Mammary epithelial cell (primary cell): ENCODE measurements at regions of chr4 and their contacts with region 1.

Region 1: GRCh38 chr4:134024251-134024650 is 177.3 kb downstream of the PABPC4L start:
- DNase-seq: no peak
- H3K4me3 ChIP-seq: no peak overlapping the region
- H3K27ac ChIP-seq: no peak overlapping the region
- H3K4me1 ChIP-seq: no peaks in the 10 kb centered on the region
- H3K27me3 ChIP-seq: no peaks in the 10 kb centered on the region
- CTCF ChIP-seq: peak in 1 of 2 donors; percentile 64

Region 2: DNA sequence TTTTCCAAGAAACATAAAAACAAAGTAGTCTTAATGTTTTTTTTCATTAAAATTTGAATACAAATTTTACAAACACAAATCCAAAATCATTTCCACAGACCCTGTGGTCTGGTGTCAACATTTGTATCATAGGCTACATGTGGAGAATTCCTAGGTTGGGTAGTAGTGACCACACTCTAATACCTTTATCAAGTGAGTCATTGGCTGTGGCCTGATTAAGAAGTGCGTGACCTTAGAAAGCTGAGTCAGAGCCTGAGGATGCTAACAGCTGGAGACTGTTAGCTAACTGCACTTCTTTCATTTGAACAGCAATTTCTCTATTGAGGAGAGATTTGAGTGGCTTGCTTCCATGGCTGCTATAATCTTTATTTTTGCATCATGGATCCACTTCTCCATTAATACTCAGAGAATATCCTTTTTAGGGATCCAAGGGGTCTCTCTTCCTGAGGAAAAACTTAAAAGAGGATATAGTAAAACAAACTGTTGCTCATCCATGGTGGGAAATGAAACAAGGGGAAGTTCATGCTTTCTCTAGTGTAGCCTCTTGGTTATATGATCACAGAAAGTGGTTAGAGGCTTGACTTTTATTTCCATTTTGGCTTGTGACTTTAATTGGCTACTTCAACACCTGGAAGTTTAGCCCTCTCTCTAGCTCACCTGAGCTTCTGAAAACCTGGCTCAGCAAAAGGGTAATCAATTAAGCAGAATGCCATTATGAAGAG is 158.5 kb before region 1 on chr4:
- CTCF ChIA-PET with region 1: no interaction called
- dilution Hi-C with region 1: no loop called
- in situ Hi-C with region 1: no loop called
- intact Hi-C with region 1: loop called (anchors 10 kb)
- DNase-seq: peak; percentile 74
- H3K4me3 ChIP-seq: no peak overlapping the region
- H3K27ac ChIP-seq: no peak overlapping the region
- H3K4me1 ChIP-seq: peaks cover 6% of the 10 kb centered on the region
- H3K27me3 ChIP-seq: no peaks in the 10 kb centered on the region
- CTCF ChIP-seq: no peak

Region 3: DNA sequence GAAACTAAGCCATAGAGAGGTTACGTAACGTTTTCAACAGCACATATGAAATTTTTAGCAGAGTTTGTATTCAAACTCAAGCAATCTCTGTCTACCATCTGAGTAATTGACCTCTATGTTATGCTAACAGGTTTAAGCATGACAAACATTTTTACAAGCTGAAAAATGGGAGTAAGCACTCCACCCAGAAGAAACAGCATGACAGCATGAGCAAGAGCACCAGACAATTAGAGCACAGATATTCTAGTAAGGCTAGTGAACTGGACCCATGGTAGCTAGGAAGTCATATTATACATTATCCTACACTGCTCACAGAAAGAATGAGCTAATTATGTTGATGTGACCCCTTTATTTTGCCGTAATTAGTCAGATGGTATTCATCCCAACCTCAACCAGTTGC is 23.2 kb before region 1 on chr4:
- CTCF ChIA-PET with region 1: no interaction called
- dilution Hi-C with region 1: no loop called
- in situ Hi-C with region 1: no loop called
- intact Hi-C with region 1: loop called (anchors 1 kb)
- DNase-seq: peak; percentile 65
- H3K4me3 ChIP-seq: no peak overlapping the region
- H3K27ac ChIP-seq: no peak overlapping the region
- H3K4me1 ChIP-seq: no peaks in the 10 kb centered on the region
- H3K27me3 ChIP-seq: no peaks in the 10 kb centered on the region
- CTCF ChIP-seq: no peak

Region 4: GRCh38 chr4:134073711-134074110 is 49.5 kb after region 1 on chr4:
- CTCF ChIA-PET with region 1: no interaction called
- dilution Hi-C with region 1: no loop called
- in situ Hi-C with region 1: no loop called
- intact Hi-C with region 1: loop called (anchors 1 kb)
- DNase-seq: no peak
- H3K4me3 ChIP-seq: no peak overlapping the region
- H3K27ac ChIP-seq: no peak overlapping the region
- H3K4me1 ChIP-seq: no peaks in the 10 kb centered on the region
- H3K27me3 ChIP-seq: no peaks in the 10 kb centered on the region
- CTCF ChIP-seq: no peak